ENCODE measurements at regions of chr4 and their contacts with region 1.

Region 1: GRCh38 chr4:55948726-55949474 is at the start of gene CEP135:
- DNase-seq: peak; percentile 77
- ATAC-seq: peak; percentile 85
- H3K4me3 ChIP-seq: peak within 1 kb of the TSS; percentile 77 to 82
- H3K27ac ChIP-seq: peak within 1 kb of the TSS; percentile 94
- H3K4me1 ChIP-seq: peaks cover 14 to 23% of the 10 kb centered on the region in 2 experiments
- H3K27me3 ChIP-seq: no peaks in the 10 kb centered on the region
- CTCF ChIP-seq: peak; percentile 75 to 92 (median 89)
- POLR2A ChIP-seq: peak; percentile 49
- RAD21 ChIP-seq: peak; percentile 91
- total RNA-seq, gene CEP135: 10.9 TPM

Region 2: DNA sequence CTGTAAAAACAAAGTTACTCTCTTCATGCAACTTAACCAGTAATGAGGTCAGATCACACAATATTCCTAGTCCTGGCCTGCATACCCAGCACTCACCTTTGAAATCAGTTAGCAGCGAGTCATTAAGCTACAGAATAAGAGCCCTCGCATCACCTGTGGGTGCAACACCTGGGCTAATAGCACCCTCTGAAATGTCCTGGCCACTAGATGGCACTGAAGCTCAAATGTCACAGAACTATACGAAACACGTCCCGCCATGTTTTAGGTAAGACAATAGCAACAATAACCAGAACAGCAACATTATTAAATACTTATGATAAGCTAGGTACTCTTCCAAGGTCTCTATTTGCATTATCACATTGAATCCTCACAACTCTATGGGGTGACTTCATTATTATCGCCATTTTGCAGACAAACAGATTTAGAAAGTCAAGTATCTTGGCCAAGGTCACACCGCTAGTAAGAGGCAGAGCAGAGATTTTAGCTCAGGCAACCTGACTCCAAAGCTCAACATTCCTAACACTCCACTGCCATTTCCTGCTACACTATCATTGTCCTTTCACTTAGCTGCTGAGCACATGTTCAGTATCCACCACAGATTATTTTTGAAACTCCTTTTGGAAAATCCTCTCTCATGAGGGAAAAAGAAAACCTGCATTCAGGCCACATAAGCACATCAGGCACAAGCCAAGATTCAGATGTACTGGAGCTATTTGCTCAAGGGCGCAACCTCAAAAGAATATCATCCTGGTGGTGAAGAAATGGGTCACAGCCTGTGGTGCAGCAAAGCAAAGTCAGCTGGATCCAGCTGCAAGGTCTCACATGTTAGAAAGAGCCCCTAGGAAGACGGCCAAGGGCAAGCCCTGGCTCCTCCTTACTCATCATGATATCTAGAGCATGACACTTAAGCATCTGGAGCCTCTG is 764.0 kb before region 1 on chr4:
- CTCF ChIA-PET with region 1: no interaction called
- POLR2A ChIA-PET with region 1: no interaction called
- RAD21 ChIA-PET with region 1: no interaction called
- intact Hi-C with region 1: loop called (anchors 10 kb)
- DNase-seq: peak; percentile 64
- ATAC-seq: peak; percentile 80
- H3K4me3 ChIP-seq: peak overlapping the region in 1 of 2 experiments; percentile 17; a peak in 2 of 4 replicates
- H3K27ac ChIP-seq: peak overlapping the region; percentile 59
- H3K4me1 ChIP-seq: peaks cover 16 to 21% of the 10 kb centered on the region in 2 experiments
- H3K27me3 ChIP-seq: no peaks in the 10 kb centered on the region
- CTCF ChIP-seq: peak; percentile 53 to 79 (median 69); a peak in 5 of 6 replicates
- POLR2A ChIP-seq: no peak
- RAD21 ChIP-seq: peak; percentile 56

Region 3: DNA sequence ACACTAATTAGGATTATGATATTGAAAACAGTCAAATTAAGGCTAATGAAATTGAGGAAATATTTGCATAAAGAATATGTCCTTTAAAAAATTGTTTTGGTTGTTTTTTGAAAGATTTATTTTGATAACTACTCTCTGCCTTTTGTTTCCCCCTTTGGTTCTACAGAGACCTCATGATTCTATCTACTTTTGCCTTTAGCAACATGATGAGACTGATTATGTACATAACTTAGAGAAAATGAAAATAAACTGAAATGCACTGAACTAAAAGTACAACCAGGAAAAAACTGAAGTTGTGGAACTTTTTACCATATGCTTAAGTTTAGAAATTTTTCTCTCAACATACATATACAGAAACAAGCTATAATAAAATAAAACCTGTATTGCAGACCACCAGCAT is 74.1 kb before region 1 on chr4:
- CTCF ChIA-PET with region 1: no interaction called
- POLR2A ChIA-PET with region 1: no interaction called
- RAD21 ChIA-PET with region 1: no interaction called
- intact Hi-C with region 1: no loop called
- DNase-seq: no peak
- ATAC-seq: no peak
- H3K4me3 ChIP-seq: no peak overlapping the region
- H3K27ac ChIP-seq: no peak overlapping the region
- H3K4me1 ChIP-seq: no peaks in the 10 kb centered on the region
- H3K27me3 ChIP-seq: no peaks in the 10 kb centered on the region
- CTCF ChIP-seq: no peak
- POLR2A ChIP-seq: no peak
- RAD21 ChIP-seq: no peak

Region 4: GRCh38 chr4:55965585-55965984 is 16.7 kb after region 1 on chr4:
- CTCF ChIA-PET with region 1: interaction called, 11 read pairs
- POLR2A ChIA-PET with region 1: no interaction called
- RAD21 ChIA-PET with region 1: no interaction called
- intact Hi-C with region 1: no loop called
- DNase-seq: no peak
- ATAC-seq: no peak
- H3K4me3 ChIP-seq: no peak overlapping the region
- H3K27ac ChIP-seq: no peak overlapping the region
- H3K4me1 ChIP-seq: peaks cover 0 to 3% of the 10 kb centered on the region in 2 experiments; a peak in 1 of 4 replicates
- H3K27me3 ChIP-seq: no peaks in the 10 kb centered on the region
- CTCF ChIP-seq: no peak
- POLR2A ChIP-seq: no peak
- RAD21 ChIP-seq: no peak

Region 5: DNA sequence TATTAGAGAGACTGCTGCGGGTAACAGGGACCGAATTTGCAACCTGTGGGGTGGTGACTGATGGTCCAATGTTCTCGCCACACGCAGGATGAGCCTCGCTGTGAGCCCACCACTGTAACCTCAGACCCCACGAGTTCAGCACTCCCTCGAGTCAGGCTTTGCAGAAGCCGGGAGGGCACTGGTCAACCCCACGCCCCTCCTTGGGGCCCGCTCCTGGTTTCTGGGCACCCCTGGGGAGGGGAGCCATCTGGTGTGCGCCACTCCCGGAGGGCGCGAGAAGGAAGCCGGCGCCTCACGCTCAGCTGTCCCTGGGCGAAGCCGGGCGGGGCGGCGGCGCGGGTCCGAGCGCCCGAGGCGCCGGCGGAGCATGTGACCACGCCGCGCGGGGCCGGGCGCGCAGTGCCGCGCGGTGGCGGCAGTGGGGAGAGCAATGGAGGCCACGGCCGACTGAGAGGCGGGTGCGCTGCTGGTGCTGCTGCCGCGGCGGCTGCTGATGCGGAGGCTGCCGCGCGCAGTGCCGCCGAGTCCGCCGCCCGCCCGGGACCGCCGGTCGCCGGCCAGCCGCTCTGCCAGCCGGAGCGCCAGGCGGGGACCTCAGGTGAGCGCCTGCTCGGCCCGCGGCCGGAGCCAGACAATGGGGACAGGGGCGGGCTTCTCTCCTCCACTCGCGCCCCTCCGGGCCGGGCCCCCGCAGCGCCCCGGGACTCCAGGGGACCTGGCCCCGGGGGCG is 100.0 kb after region 1 on chr4:
- CTCF ChIA-PET with region 1: interaction called, 5 read pairs
- POLR2A ChIA-PET with region 1: no interaction called
- RAD21 ChIA-PET with region 1: no interaction called
- intact Hi-C with region 1: loop called (anchors 2 kb)
- DNase-seq: peak; percentile 29
- ATAC-seq: peak; percentile 89
- H3K4me3 ChIP-seq: peak overlapping the region; percentile 67 to 77
- H3K27ac ChIP-seq: peak overlapping the region; percentile 88
- H3K4me1 ChIP-seq: peaks cover 7 to 16% of the 10 kb centered on the region in 2 experiments; a peak in 3 of 4 replicates
- H3K27me3 ChIP-seq: no peaks in the 10 kb centered on the region
- CTCF ChIP-seq: peak in 1 of 3 experiments; percentile 35; a peak in 2 of 6 replicates
- POLR2A ChIP-seq: peak; percentile 48
- RAD21 ChIP-seq: peak; percentile 33

Region 6: GRCh38 chr4:56301181-56302076 is 352.5 kb after region 1 on chr4:
- CTCF ChIA-PET with region 1: interaction called, 9 read pairs
- POLR2A ChIA-PET with region 1: no interaction called
- RAD21 ChIA-PET with region 1: interaction called in 1 of 2 experiments, 6 read pairs
- intact Hi-C with region 1: loop called (anchors 1 kb)
- DNase-seq: peak; percentile 59
- ATAC-seq: peak; percentile 99
- H3K4me3 ChIP-seq: no peak overlapping the region
- H3K27ac ChIP-seq: no peak overlapping the region
- H3K4me1 ChIP-seq: peaks cover 0 to 18% of the 10 kb centered on the region in 2 experiments; a peak in 3 of 4 replicates
- H3K27me3 ChIP-seq: no peaks in the 10 kb centered on the region
- CTCF ChIP-seq: peak; percentile 86 to 95 (median 94)
- POLR2A ChIP-seq: no peak
- RAD21 ChIP-seq: peak; percentile 96

Region 7: GRCh38 chr4:56435306-56435926 is 486.5 kb after region 1 on chr4 and contains the start of gene PPAT:
- CTCF ChIA-PET with region 1: interaction called, 10 read pairs
- POLR2A ChIA-PET with region 1: no interaction called
- RAD21 ChIA-PET with region 1: no interaction called
- intact Hi-C with region 1: no loop called
- DNase-seq: peak; percentile 94
- ATAC-seq: peak; percentile 84
- H3K4me3 ChIP-seq: peak within 1 kb of the TSS; percentile 70 to 91
- H3K27ac ChIP-seq: peak within 1 kb of the TSS; percentile 89
- H3K4me1 ChIP-seq: peaks cover 3 to 19% of the 10 kb centered on the region in 2 experiments; a peak in 3 of 4 replicates
- H3K27me3 ChIP-seq: no peaks in the 10 kb centered on the region
- CTCF ChIP-seq: peak in 1 of 3 experiments; percentile 18; a peak in 1 of 6 replicates
- POLR2A ChIP-seq: peak; percentile 65
- RAD21 ChIP-seq: no peak
- total RNA-seq, gene PPAT: 78.6 TPM

Region 8: DNA sequence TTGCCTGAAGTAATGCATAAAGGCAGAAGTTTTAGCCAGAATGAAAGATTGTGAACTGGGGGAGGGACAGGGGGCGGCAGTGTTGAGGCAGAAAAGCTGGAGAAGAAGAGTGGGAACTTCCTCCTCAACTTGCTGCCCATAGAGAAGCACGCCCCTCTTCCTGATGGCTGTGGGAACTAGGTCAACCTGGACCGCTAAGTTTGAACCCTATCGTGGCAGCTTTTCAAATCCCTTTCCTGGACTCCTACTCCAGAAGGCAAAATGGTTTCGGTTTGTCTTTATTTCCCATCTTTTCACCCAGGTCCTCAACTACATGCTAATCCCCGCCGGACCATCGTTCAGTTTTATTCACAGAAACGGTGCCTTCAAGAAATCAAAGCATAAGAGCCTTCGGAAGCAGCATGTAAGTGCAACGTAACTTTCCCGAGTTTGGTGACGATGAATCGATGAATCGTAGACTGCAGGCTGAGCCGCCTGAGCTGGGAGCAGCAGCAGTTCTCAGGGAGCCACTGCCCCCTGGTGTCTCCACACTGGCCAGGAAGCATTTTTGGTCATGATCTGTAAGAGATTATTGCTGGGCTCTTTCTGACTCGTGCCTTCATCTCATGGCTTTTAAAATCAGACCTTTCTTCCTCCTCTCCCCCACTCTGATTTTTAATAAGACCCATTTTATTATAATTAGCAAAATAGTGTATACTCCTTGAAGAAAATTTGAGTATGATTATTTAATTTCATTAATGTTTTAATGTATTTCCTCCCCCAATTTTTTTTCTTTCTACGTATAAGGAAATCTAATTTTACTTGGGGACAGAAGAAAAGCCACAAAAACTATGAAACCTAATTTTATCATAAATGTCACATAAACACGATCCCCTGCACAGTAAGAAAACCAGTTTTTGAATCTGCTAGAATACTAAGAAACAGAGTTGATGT is 851.2 kb after region 1 on chr4:
- CTCF ChIA-PET with region 1: interaction called, 4 read pairs
- POLR2A ChIA-PET with region 1: no interaction called
- RAD21 ChIA-PET with region 1: no interaction called
- intact Hi-C with region 1: loop called (anchors 1 kb)
- DNase-seq: peak; percentile 79
- ATAC-seq: peak; percentile 96
- H3K4me3 ChIP-seq: peak overlapping the region; percentile 66 to 72
- H3K27ac ChIP-seq: peak overlapping the region; percentile 25
- H3K4me1 ChIP-seq: peaks cover 0 to 6% of the 10 kb centered on the region in 2 experiments; a peak in 2 of 4 replicates
- H3K27me3 ChIP-seq: no peaks in the 10 kb centered on the region
- CTCF ChIP-seq: peak; percentile 89 to 90 (median 89)
- POLR2A ChIP-seq: no peak
- RAD21 ChIP-seq: peak; percentile 97